ENCODE measurements at regions of chr20 and their contacts with region 1.

Region 1: GRCh38 chr20:58907399-58908137 is 55.1 kb downstream of the GNAS start:
- DNase-seq: peak; percentile 57 to 73
- H3K4me3 ChIP-seq: no peak overlapping the region
- H3K4me1 ChIP-seq: peaks cover 13% of the 10 kb centered on the region
- H3K27me3 ChIP-seq: no peaks in the 10 kb centered on the region

Region 2: GRCh38 chr20:58980700-58981627 is 73.4 kb after region 1 on chr20 and contains the start of gene NELFCD:
- in situ Hi-C with region 1: loop called (anchors 10 kb)
- DNase-seq: peak; percentile 87 to 96
- H3K4me3 ChIP-seq: peak within 1 kb of the TSS; percentile 65
- H3K4me1 ChIP-seq: peaks cover 6% of the 10 kb centered on the region
- H3K27me3 ChIP-seq: no peaks in the 10 kb centered on the region

Region 3: DNA sequence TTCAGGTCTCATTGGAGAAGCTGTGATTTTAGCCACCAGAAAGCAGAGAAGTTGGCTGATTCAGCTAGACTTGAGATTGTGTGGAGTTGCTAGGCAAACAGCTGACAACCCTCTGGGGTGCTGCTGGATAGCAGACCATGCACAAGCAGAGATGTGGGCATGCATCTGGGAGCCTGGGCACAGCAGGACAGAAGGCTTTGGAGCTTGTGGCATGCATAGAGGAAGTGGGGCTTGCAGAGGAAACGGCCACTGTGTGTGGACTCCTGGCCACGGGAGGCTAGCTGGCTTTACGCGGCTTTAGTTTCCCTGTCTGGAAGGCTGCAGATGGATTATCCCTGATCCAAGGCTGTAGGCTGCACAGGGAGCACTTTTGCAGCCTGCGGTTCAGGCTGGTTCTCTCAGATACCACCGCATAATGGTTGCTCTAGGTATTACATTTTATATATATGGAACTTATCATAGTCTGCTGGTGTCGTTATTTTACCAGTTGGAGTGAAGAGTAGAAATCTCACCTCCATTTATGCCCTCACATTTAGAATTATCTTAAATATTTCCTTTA is 266.4 kb after region 1 on chr20:
- in situ Hi-C with region 1: no loop called
- DNase-seq: no peak
- H3K4me3 ChIP-seq: no peak overlapping the region
- H3K4me1 ChIP-seq: no peaks in the 10 kb centered on the region
- H3K27me3 ChIP-seq: peaks cover 2% of the 10 kb centered on the region; the same call in 1 of the 2 replicates

Measured in HAP-1 (cell line).